ENCODE measurements at regions of chr9 and their contacts with region 1.

Region 1: DNA sequence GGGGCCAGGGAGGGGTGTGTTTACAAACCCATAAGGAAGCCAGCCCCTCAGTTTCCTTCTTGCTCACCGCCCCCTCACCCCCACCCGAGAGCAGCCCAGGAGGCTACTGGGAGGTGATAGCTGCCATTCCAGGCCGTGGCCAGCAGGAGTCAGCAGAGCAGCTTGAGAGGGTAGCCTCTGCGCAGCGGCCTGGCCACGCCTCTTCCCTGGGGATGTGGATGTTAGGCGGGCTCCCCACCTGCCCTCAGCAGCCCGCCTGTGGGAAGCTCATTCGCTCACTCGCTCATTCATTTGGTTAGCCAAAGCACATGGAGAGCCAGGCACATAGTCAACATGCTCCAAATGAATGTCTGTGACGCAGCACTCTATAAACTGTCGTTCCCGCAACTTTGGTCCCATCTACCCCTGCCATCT is 6.1 kb upstream of the DPM2 start:
- DNase-seq: peak; percentile 89
- H3K4me3 Mint-ChIP-seq: no peak overlapping the region
- H3K27ac Mint-ChIP-seq: peak overlapping the region; percentile 82
- H3K4me1 Mint-ChIP-seq: peaks cover 37% of the 10 kb centered on the region
- H3K27me3 Mint-ChIP-seq: no peaks in the 10 kb centered on the region

Region 2: DNA sequence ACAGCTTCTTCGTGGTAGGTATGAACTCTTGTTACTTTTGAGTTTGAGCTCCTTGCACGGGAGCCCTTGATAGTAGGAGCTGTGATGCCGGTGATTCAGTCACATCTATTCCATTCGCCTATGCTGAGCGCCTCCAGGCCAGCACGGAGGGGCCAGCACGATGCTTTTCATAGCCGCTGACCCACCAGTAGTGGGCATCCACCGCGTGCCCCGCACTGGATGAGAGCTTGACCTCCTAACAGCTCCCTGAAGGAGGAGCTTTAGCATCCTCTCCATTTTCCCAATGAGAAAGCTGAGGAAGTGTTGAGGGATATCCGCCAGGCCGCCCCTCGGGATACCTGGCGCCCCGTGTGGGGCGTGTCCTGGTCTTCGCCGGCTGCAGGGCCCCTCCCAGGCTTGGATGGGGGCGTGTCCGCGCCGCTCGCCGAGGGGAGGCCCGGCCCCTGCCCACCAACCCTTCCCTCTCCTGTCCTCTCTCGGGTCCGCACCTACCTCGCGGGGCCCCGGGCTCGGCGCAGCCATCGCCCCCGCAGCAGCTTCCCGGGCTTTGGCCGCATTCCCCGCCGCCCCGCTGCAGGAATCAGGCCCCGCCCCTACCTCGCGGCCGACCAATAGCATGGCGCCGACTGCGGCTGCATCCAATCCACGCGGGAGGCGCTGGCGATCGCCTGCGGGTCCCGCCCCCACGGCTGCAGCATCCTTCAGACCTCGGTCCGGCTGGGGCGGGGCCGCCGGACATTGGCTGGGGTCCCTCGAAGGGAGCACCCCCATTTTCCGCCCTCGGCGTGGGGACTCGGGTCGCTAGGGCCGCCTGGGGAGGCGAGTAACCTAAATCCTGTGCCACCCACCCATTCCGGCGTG is 13.3 kb before region 1 on chr9 and contains the start of gene PIP5KL1:
- CTCF ChIA-PET with region 1: interaction called, 16 read pairs
- intact Hi-C with region 1: no loop called
- DNase-seq: peak; percentile 61
- H3K4me3 Mint-ChIP-seq: peak within 1 kb of the TSS; percentile 62
- H3K27ac Mint-ChIP-seq: no peak within 1 kb of the TSS
- H3K4me1 Mint-ChIP-seq: peaks cover 35% of the 10 kb centered on the region
- H3K27me3 Mint-ChIP-seq: peaks cover 6% of the 10 kb centered on the region
- total RNA-seq, gene PIP5KL1: 1.1 to 1.8 TPM

Region 3: GRCh38 chr9:128103589-128103962 is 159.8 kb after region 1 on chr9:
- CTCF ChIA-PET with region 1: interaction called, 4 read pairs
- intact Hi-C with region 1: loop called (anchors 1 kb)
- DNase-seq: peak; percentile 76
- H3K4me3 Mint-ChIP-seq: no peak overlapping the region
- H3K27ac Mint-ChIP-seq: peak overlapping the region; percentile 44
- H3K4me1 Mint-ChIP-seq: peaks cover 39% of the 10 kb centered on the region
- H3K27me3 Mint-ChIP-seq: no peaks in the 10 kb centered on the region

Region 4: DNA sequence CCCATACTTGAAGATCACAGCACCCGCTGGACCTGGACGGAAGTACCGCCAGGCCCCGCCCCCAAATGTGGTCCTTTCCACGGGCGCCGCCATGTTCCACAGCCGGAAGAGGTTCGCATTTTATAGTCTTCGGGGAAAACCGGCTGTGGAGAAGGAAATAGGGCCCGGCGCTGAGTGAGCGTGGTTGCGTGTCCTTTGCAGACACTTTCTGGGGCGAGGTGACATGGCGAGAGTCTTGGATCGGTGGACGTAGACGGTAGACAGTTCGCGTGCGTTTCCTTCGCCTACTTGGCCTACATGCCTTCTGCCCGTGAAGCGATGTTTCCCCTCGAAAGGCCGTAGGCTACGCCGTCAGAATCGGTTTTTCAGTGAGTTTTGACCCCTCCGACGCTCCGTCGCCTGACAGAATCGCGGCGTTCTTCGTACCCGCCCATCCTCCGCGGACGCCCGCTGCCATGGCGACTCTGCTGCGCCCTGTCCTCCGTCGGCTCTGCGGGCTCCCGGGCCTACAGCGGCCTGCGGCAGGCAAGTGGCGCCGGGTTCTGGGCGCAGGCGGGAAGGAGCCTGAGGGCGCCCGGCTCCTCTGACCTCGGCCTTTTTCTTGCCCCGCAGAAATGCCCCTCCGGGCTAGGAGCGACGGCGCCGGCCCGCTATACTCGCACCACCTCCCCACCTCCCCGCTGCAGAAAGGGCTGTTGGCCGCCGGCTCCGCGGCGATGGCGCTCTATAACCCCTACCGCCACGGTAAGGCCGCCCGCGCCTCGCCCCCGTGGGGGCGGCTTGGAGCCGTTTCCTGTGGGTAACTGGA is 378.9 kb after region 1 on chr9 and contains the starts of genes COQ4 and TRUB2:
- CTCF ChIA-PET with region 1: no interaction called
- intact Hi-C with region 1: no loop called
- DNase-seq: peak; percentile 95
- H3K4me3 Mint-ChIP-seq: peak within 1 kb of the TSS; percentile 90
- H3K27ac Mint-ChIP-seq: peak within 1 kb of the TSS; percentile 94
- H3K4me1 Mint-ChIP-seq: peaks cover 22% of the 10 kb centered on the region
- H3K27me3 Mint-ChIP-seq: no peaks in the 10 kb centered on the region
- total RNA-seq, gene COQ4: 27.8 to 29.6 TPM
- total RNA-seq, gene TRUB2: 28.0 to 29.4 TPM

Measured in activated naive CD4-positive, alpha-beta T cell treated with anti-CD3 and anti-CD28 coated beads for 36 hours (primary cell).